ENCODE measurements at regions of chr18 and their contacts with region 1.

Region 1: GRCh38 chr18:79528846-79529245 is 133.1 kb downstream of the NFATC1 start:
- DNase-seq: peak; percentile 68 to 75 (median 72)
- ATAC-seq: peak; percentile 90
- H3K4me3 ChIP-seq: no peak overlapping the region
- H3K27ac ChIP-seq: no peak overlapping the region
- H3K4me1 ChIP-seq: peaks cover 0 to 28% of the 10 kb centered on the region in 2 experiments; a peak in 2 of 5 replicates
- H3K27me3 ChIP-seq: peaks cover 0 to 14% of the 10 kb centered on the region in 2 experiments; a peak in 1 of 5 replicates
- CTCF ChIP-seq: peak; percentile 79 to 86 (median 81)
- EP300 ChIP-seq: no peak
- POLR2A ChIP-seq: no peak
- RAD21 ChIP-seq: peak; percentile 81 to 87

Region 2: GRCh38 chr18:79378542-79379250 is 150.2 kb before region 1 on chr18:
- CTCF ChIA-PET with region 1: interaction called, 24 read pairs
- POLR2A ChIA-PET with region 1: no interaction called
- in situ Hi-C with region 1: loop called (anchors 5 kb)
- intact Hi-C with region 1: loop called (anchors 1 kb)
- DNase-seq: peak; percentile 51 to 58 (median 54)
- ATAC-seq: peak; percentile 79
- H3K4me3 ChIP-seq: no peak overlapping the region
- H3K27ac ChIP-seq: no peak overlapping the region
- H3K4me1 ChIP-seq: peaks cover 0 to 15% of the 10 kb centered on the region in 2 experiments; a peak in 2 of 5 replicates
- H3K27me3 ChIP-seq: no peaks in the 10 kb centered on the region; a peak in 1 of 5 replicates
- CTCF ChIP-seq: peak; percentile 63 to 74 (median 69)
- EP300 ChIP-seq: no peak
- POLR2A ChIP-seq: no peak
- RAD21 ChIP-seq: peak; percentile 34 to 63

Region 3: GRCh38 chr18:79395761-79396387 is 133.0 kb before region 1 on chr18 and contains the start of gene NFATC1:
- CTCF ChIA-PET with region 1: no interaction called
- POLR2A ChIA-PET with region 1: no interaction called
- in situ Hi-C with region 1: no loop called
- intact Hi-C with region 1: loop called (anchors 5 kb)
- DNase-seq: peak; percentile 72 to 79 (median 77)
- ATAC-seq: peak; percentile 45
- H3K4me3 ChIP-seq: peak within 1 kb of the TSS; percentile 50
- H3K27ac ChIP-seq: peak within 1 kb of the TSS; percentile 55; the same call in 1 of the 3 replicates
- H3K4me1 ChIP-seq: peaks cover 0 to 61% of the 10 kb centered on the region in 2 experiments; a peak in 2 of 5 replicates
- H3K27me3 ChIP-seq: no peaks in the 10 kb centered on the region
- CTCF ChIP-seq: no peak
- EP300 ChIP-seq: no peak
- POLR2A ChIP-seq: no peak
- RAD21 ChIP-seq: no peak
- polyA plus RNA-seq, gene NFATC1: 1.1 to 1.2 TPM

Region 4: DNA sequence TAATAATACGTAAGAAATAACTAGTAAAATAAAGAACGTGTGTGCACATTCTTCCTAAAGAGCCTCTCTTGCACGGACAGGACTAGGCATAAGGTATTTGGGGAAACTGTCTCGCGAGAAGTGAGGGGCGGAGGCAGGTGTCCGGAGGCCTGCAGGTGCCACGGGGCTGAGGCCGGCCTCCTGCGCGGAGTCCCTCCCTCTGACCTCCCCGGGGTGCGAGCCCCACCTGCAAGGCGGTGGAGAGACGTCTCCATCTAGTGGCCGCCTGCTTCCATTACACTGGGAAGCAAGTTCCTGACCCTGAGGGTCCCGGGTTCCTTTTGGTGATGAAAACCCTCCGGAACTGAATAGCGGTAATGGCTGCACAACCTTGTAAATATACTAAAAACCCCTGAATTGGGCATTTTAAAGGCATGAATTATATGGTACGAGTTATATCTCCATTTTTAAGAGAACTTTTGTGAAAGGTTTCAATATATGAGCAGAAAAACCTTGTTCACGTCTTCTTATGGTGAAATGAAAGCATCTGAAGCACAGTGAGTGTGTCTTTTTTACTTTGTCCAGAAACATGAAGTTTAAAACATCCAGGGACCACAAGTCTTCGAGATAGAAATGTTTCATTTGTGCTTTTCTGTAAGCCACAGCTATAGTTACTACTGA is 115.3 kb after region 1 on chr18:
- CTCF ChIA-PET with region 1: no interaction called
- POLR2A ChIA-PET with region 1: no interaction called
- in situ Hi-C with region 1: no loop called
- intact Hi-C with region 1: loop called (anchors 5 kb)
- DNase-seq: peak; percentile 73 to 90 (median 86)
- ATAC-seq: peak; percentile 95
- H3K4me3 ChIP-seq: no peak overlapping the region
- H3K27ac ChIP-seq: no peak overlapping the region
- H3K4me1 ChIP-seq: 0 out of 5 replicates have a peak, but pooled peaks cover 0 to 6% of the 10 kb centered on the region in 2 experiments
- H3K27me3 ChIP-seq: peaks cover 2 to 21% of the 10 kb centered on the region in 2 experiments; a peak in 3 of 5 replicates
- CTCF ChIP-seq: peak; percentile 77 to 79 (median 79)
- EP300 ChIP-seq: no peak
- POLR2A ChIP-seq: no peak
- RAD21 ChIP-seq: peak; percentile 84 to 90

Measured in K562 (cell line).